ENCODE measurements at regions of chr9 and their contacts with region 1.

Region 1: GRCh38 chr9:136363606-136364370 is at the start of gene DNLZ:
- DNase-seq: peak; percentile 87
- ATAC-seq: peak; percentile 54 to 62
- H3K4me3 ChIP-seq: peak within 1 kb of the TSS; percentile 88
- H3K27ac ChIP-seq: peak within 1 kb of the TSS; percentile 96 to 98
- H3K4me1 ChIP-seq: peaks cover 13% of the 10 kb centered on the region; the same call in 2 of the 3 replicates
- CTCF ChIP-seq: peak; percentile 97
- EP300 ChIP-seq: no peak
- POLR2A ChIP-seq: peak; percentile 60
- RAD21 ChIP-seq: peak in 1 of 2 experiments; percentile 53; a peak in 4 of 5 replicates
- polyA plus RNA-seq, gene DNLZ: 5.1 and 8.0 TPM in 2 replicates

Region 2: GRCh38 chr9:136339173-136339957 is 24.4 kb before region 1 on chr9:
- CTCF ChIA-PET with region 1: interaction called, 14 read pairs
- POLR2A ChIA-PET with region 1: interaction called, 8 read pairs
- DNase-seq: peak; percentile 74 to 79
- ATAC-seq: peak; percentile 67 to 92
- H3K4me3 ChIP-seq: no peak overlapping the region
- H3K27ac ChIP-seq: no peak overlapping the region
- H3K4me1 ChIP-seq: 0 out of 3 replicates have a peak, but pooled peaks cover 3% of the 10 kb centered on the region
- CTCF ChIP-seq: peak; percentile 91
- EP300 ChIP-seq: no peak
- POLR2A ChIP-seq: no peak
- RAD21 ChIP-seq: peak; percentile 68 to 72

Region 3: DNA sequence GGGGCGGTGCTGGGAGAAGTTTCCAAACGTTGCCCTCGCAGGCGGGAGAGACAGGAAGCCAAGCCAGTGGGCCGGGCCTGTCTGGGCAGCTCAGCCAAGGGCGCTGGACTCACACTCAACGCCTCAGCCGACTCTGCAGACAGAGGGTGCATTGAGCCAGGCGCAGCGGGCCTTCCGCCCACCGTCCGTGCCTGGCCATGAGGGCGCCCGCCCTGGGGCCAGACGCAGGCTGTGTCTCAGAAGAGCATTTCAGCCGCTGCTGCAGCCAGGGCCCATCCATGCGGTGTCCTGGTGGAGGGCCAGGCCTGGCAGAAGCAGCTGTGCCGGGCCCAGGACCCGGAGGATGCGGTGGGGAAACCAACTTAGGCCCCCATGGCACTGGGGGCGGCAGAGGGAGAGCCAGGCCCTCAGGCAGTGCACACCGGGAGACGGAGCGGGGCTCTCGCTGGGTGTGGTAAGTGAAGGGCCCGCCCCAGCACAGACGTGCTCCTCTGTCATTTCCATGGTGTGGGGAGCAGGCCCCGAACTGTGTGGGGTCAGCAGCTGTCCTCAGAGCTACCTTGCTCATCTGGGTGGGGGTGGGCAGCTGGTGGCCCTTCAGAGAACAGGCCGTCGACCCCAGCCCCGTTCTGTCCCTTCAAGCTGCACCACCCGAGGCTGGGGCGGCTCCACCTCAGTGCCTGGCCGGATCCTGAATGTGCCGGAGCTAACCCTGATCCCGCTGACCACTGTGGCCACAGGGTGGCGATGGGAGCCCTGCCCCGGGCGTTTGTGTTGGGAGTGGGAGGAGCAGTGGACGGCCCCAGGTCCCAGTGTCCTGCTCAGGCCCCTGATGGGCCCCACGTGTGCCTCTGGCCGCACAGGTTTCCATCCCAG is 18.3 kb before region 1 on chr9:
- CTCF ChIA-PET with region 1: interaction called, 14 read pairs
- POLR2A ChIA-PET with region 1: interaction called, 25 read pairs
- DNase-seq: peak; percentile 52 to 57
- ATAC-seq: peak; percentile 70 to 87
- H3K4me3 ChIP-seq: no peak overlapping the region
- H3K27ac ChIP-seq: peak overlapping the region in 1 of 2 experiments; percentile 73; a peak in 3 of 6 replicates
- H3K4me1 ChIP-seq: peaks cover 8% of the 10 kb centered on the region; the same call in 2 of the 3 replicates
- CTCF ChIP-seq: peak; percentile 34; the same call in 2 of the 3 replicates
- EP300 ChIP-seq: no peak
- POLR2A ChIP-seq: no peak
- RAD21 ChIP-seq: peak; percentile 36 to 52

Region 4: GRCh38 chr9:136392538-136393449 is 29.0 kb after region 1 on chr9:
- CTCF ChIA-PET with region 1: interaction called, 29 read pairs
- POLR2A ChIA-PET with region 1: interaction called, 33 read pairs
- DNase-seq: no peak
- ATAC-seq: peak in 1 of 2 experiments; percentile 28; a peak in 3 of 6 replicates
- H3K4me3 ChIP-seq: no peak overlapping the region
- H3K27ac ChIP-seq: no peak overlapping the region
- H3K4me1 ChIP-seq: no peaks in the 10 kb centered on the region
- CTCF ChIP-seq: no peak
- EP300 ChIP-seq: no peak
- POLR2A ChIP-seq: no peak
- RAD21 ChIP-seq: no peak